Aorta (tissue), 5 donors: ENCODE measurements at regions of chr12 and their contacts with region 1.

Region 1: DNA sequence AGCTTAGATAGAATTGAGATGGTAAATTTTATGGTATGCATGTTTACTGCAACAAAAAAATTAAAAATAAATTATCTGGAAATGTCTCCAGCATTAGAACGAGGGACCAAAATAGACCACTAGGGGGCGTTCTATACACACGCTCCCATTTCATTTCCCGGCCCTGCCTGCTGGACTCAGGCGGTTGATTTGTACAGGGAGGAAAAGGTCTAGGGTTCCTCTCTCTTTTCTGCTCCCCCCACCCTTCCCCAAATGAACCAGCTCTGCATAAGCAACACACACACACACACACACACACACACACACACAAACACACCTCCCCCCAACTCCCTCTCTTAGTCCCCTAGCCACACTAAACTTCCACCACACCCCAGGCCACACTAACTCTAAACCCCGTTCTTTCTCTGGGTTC is 7.8 kb upstream of the DTX1 start:
- DNase-seq: no peak
- ATAC-seq: peak; percentile 82
- H3K4me3 ChIP-seq: no peak overlapping the region
- H3K27ac ChIP-seq: no peak overlapping the region
- H3K4me1 ChIP-seq: no peaks in the 10 kb centered on the region
- H3K27me3 ChIP-seq: no peaks in the 10 kb centered on the region

Region 2: GRCh38 chr12:113152835-113153814 is 104.4 kb after region 1 on chr12:
- intact Hi-C with region 1: loop called in 1 of 2 experiments (anchors 5 kb)
- DNase-seq: peak; percentile 78 to 85
- ATAC-seq: peak; percentile 84
- H3K4me3 ChIP-seq: peak overlapping the region in 1 of 2 donors; percentile 8
- H3K27ac ChIP-seq: no peak overlapping the region
- H3K4me1 ChIP-seq: no peaks in the 10 kb centered on the region
- H3K27me3 ChIP-seq: no peaks in the 10 kb centered on the region

Region 3: GRCh38 chr12:113174461-113175384 is 126.0 kb after region 1 on chr12:
- intact Hi-C with region 1: loop called (anchors 1 to 5 kb)
- DNase-seq: peak; percentile 81 to 93
- ATAC-seq: peak; percentile 86
- H3K4me3 ChIP-seq: no peak overlapping the region
- H3K27ac ChIP-seq: no peak overlapping the region
- H3K4me1 ChIP-seq: no peaks in the 10 kb centered on the region
- H3K27me3 ChIP-seq: no peaks in the 10 kb centered on the region